CD4-positive, alpha-beta memory T cell (primary cell): ENCODE measurements at regions of chr1 and their contacts with region 1.

Region 1: DNA sequence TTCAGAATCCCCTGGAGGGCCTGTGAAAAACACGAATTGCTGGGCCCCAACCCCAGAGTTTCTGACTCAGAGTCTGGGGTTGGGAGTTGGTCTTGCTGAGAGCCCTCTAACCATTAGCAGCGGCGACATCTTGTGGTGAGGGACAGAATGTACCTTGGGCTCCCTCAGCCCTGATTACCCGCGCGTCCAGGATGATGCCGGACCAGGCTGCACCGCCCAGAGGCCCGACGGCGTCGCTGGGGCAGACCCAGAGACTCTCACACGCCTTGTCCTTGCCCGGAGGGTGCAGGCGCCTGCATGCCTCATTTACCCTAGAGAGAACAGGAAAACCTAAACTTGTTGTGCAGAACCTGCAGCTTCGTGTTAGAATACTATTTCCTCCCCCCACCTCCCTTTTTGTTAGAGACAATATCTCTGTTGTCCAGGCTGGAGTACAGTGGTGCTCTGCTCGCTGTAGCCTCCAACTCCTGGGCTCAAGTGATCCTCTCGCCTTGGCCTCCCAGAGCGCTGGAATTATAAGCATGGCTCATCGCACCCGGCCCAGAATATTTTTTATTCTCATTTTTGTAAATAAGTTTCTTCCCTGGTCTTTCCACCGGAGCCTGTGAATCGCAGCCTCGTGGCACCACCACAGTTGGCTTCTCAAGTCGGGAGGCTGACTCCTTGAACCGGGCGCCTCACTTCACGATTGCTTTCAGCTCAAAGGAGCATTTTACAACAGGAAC is 22.2 kb upstream of the RD3 start:
- DNase-seq: peak; percentile 49 to 69 (median 54)
- H3K4me3 ChIP-seq: no peak overlapping the region
- H3K4me3 Mint-ChIP-seq: peak overlapping the region in 7 of 8 donors; percentile 72 to 89 (median 79)
- H3K27ac ChIP-seq: no peak overlapping the region
- H3K27ac Mint-ChIP-seq: peak overlapping the region in 4 of 7 donors; percentile 60 to 89 (median 66)
- H3K4me1 ChIP-seq: peaks cover 20% of the 10 kb centered on the region
- H3K4me1 Mint-ChIP-seq: peaks cover 10 to 18% (median 15%) of the 10 kb centered on the region in 4 donors
- H3K27me3 ChIP-seq: no peaks in the 10 kb centered on the region
- H3K27me3 Mint-ChIP-seq: no peaks in the 10 kb centered on the region

Region 2: GRCh38 chr1:210407207-210407886 is 1106.8 kb before region 1 on chr1:
- CTCF ChIA-PET with region 1: interaction called, 4 read pairs
- POLR2A ChIA-PET with region 1: no interaction called
- intact Hi-C with region 1: loop called (anchors 1 kb)
- DNase-seq: peak; percentile 54 to 71 (median 62)
- H3K4me3 ChIP-seq: no peak overlapping the region
- H3K4me3 Mint-ChIP-seq: no peak overlapping the region
- H3K27ac ChIP-seq: no peak overlapping the region
- H3K27ac Mint-ChIP-seq: no peak overlapping the region
- H3K4me1 ChIP-seq: no peaks in the 10 kb centered on the region
- H3K4me1 Mint-ChIP-seq: peaks cover 0 to 2% (median under 1%) of the 10 kb centered on the region in 4 donors
- H3K27me3 ChIP-seq: no peaks in the 10 kb centered on the region
- H3K27me3 Mint-ChIP-seq: no peaks in the 10 kb centered on the region

Region 3: DNA sequence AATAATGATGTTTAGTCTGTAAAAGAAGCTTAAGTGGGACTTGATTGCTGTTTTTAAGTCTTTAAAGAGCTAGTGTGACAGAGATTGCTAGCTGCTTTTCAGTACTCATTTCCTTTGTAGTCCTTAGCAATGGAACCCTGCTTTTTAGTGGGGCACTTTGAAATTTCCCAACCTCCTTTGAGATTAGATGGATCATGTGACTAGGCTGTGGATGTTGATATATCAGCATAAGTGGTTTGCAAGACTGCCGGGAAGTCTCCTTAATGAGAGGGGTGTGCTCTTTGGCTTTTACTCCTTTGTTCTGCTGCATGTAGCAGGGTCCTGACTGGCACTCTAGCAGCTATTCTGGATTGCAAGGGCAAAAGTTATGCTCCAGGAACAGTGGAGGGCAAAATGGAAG is 266.3 kb before region 1 on chr1:
- CTCF ChIA-PET with region 1: no interaction called
- POLR2A ChIA-PET with region 1: no interaction called
- intact Hi-C with region 1: no loop called
- DNase-seq: no peak
- H3K4me3 ChIP-seq: no peak overlapping the region
- H3K4me3 Mint-ChIP-seq: no peak overlapping the region
- H3K27ac ChIP-seq: no peak overlapping the region
- H3K27ac Mint-ChIP-seq: no peak overlapping the region
- H3K4me1 ChIP-seq: no peaks in the 10 kb centered on the region
- H3K4me1 Mint-ChIP-seq: peaks cover 0 to 7% (median 3%) of the 10 kb centered on the region in 4 donors
- H3K27me3 ChIP-seq: no peaks in the 10 kb centered on the region
- H3K27me3 Mint-ChIP-seq: peaks cover 1 to 2% of the 10 kb centered on the region in 2 donors

Region 4: DNA sequence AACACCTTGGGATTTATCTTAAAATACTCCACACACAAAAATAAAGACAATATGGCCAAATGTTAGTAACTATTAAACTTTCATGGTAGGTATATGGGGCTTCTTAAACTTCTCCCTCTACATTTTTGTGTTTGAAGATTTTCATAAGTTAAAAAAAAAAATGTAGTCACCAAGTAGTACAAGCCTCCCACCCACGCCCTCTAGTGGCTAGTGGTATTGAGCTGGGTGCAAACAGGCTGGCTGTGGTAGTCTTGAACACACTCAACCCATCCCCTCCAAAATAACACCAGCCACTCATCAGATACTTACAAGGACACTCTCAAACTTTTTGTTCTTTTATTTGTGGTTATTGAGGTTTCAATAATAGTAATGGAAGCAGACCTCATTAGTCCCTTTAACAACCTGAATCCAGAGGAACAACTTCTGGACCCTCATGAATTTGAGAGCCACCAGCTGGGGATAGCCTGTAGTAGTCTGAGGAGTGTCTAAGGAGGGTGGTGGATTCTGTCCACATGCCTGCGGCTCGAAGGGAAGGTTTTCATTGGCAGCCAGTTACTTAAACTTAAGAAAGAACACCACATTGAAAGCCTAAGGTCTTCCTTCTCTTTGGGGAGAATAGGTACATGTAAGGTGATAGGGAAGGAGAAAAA is 37.9 kb before region 1 on chr1:
- CTCF ChIA-PET with region 1: interaction called, 5 read pairs
- POLR2A ChIA-PET with region 1: no interaction called
- intact Hi-C with region 1: loop called (anchors 2 kb)
- DNase-seq: peak; percentile 69 to 73 (median 71)
- H3K4me3 ChIP-seq: no peak overlapping the region
- H3K4me3 Mint-ChIP-seq: no peak overlapping the region
- H3K27ac ChIP-seq: no peak overlapping the region
- H3K27ac Mint-ChIP-seq: no peak overlapping the region
- H3K4me1 ChIP-seq: no peaks in the 10 kb centered on the region
- H3K4me1 Mint-ChIP-seq: peaks cover 3 to 6% (median 4%) of the 10 kb centered on the region in 4 donors
- H3K27me3 ChIP-seq: peaks cover 10% of the 10 kb centered on the region
- H3K27me3 Mint-ChIP-seq: peaks cover 14 to 25% of the 10 kb centered on the region in 2 donors

Region 5: GRCh38 chr1:211524521-211524920 is 10.3 kb after region 1 on chr1:
- CTCF ChIA-PET with region 1: interaction called, 21 read pairs
- POLR2A ChIA-PET with region 1: no interaction called
- intact Hi-C with region 1: no loop called
- DNase-seq: no peak
- H3K4me3 ChIP-seq: no peak overlapping the region
- H3K4me3 Mint-ChIP-seq: no peak overlapping the region
- H3K27ac ChIP-seq: no peak overlapping the region
- H3K27ac Mint-ChIP-seq: no peak overlapping the region
- H3K4me1 ChIP-seq: peaks cover 6% of the 10 kb centered on the region
- H3K4me1 Mint-ChIP-seq: peaks cover 0 to 11% (median 6%) of the 10 kb centered on the region in 4 donors
- H3K27me3 ChIP-seq: no peaks in the 10 kb centered on the region
- H3K27me3 Mint-ChIP-seq: peaks cover 0 to 3% of the 10 kb centered on the region in 2 donors

Region 6: GRCh38 chr1:211625040-211625439 is 110.8 kb after region 1 on chr1:
- CTCF ChIA-PET with region 1: interaction called, 7 read pairs
- POLR2A ChIA-PET with region 1: no interaction called
- intact Hi-C with region 1: loop called (anchors 1 kb)
- DNase-seq: peak in 4 of 5 donors; percentile 13 to 30 (median 19)
- H3K4me3 ChIP-seq: no peak overlapping the region
- H3K4me3 Mint-ChIP-seq: no peak overlapping the region
- H3K27ac ChIP-seq: no peak overlapping the region
- H3K27ac Mint-ChIP-seq: no peak overlapping the region
- H3K4me1 ChIP-seq: peaks cover 11% of the 10 kb centered on the region
- H3K4me1 Mint-ChIP-seq: peaks cover 9 to 18% (median 15%) of the 10 kb centered on the region in 4 donors
- H3K27me3 ChIP-seq: no peaks in the 10 kb centered on the region
- H3K27me3 Mint-ChIP-seq: peaks cover 0 to 2% of the 10 kb centered on the region in 2 donors